ENCODE measurements at regions of chr5 and their contacts with region 1.

Region 1: DNA sequence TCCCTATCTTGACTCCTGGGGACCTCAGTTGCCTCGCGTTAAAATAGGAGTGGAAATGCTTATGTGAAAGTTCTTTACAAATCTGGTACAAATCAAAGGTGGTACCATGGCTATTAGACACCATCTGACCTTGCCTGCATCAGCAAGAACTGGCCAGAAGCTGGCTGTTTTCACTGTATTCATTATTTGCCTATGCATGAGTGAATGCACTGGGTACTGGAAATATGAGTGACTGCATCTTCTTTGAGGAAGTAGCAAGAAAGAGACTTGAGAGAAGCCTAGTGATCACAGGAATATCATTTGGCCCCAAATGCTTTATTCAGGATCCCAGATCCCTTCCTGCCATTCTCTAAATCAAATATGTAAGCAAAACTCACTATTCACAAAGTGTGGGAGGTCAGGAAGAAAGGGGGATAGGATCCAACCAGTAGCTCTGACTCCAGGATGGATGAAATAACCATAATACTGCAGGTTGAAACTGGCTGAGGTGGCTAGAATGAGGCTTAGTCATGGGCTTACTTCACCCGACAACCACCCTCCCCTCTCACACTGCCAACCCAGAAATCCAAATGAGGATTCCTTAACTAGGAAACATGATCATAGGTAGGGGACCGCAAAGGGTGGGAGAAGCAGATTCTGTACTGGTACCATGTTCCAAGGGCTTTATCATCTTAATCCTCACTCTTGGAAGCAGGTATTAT is 56.7 kb downstream of the FAM114A2 start:
- DNase-seq: no peak
- ATAC-seq: no peak
- H3K4me3 ChIP-seq: no peak overlapping the region
- H3K27ac ChIP-seq: no peak overlapping the region
- H3K4me1 ChIP-seq: peaks cover 0 to 23% of the 10 kb centered on the region in 2 experiments; a peak in 3 of 5 replicates
- H3K27me3 ChIP-seq: no peaks in the 10 kb centered on the region; a peak in 1 of 5 replicates
- CTCF ChIP-seq: no peak
- EP300 ChIP-seq: no peak
- POLR2A ChIP-seq: no peak
- RAD21 ChIP-seq: no peak

Region 2: DNA sequence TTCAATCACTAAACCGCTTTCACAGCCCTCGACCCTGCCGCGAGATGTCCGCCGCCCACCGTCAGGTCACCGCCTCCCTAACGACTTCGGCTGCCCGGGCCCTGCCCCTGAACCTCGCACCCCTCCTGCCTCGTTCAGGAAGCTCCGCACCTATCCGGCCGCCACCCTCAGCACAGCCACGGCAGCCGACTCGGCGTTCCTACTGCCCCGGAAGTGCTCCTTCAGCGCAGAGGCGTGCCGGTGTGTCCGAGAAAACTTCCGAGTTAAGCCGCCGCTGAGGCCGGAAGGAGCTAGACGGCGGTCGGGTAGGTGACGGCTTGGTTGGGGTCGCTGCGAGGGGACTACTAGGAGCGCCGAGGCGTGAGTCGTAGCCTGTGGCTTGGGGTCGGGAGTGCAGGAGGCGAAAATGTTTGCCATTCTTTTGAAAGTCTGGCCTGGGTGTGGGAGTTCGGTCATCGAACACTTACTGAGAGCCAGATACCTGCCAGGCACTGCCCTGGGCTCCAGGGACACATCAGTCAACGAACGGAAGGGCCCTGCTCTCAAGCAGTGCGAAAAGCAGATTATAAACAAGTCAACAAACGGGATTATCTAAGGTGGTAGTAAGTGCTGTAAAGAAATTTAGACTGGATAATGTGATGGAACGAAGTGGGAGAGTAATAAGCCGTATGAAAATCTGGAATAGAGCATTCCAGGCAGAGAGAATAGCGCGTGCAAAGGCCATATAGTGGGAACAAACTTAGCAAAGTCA is 56.8 kb after region 1 on chr5 and contains the starts of genes FAM114A2 and MFAP3:
- CTCF ChIA-PET with region 1: no interaction called
- POLR2A ChIA-PET with region 1: no interaction called
- in situ Hi-C with region 1: no loop called
- intact Hi-C with region 1: loop called (anchors 2 kb)
- DNase-seq: peak; percentile 86 to 94 (median 89)
- ATAC-seq: peak; percentile 100
- H3K4me3 ChIP-seq: peak within 1 kb of the TSS; percentile 87
- H3K27ac ChIP-seq: peak within 1 kb of the TSS; percentile 88
- H3K4me1 ChIP-seq: 0 out of 5 replicates have a peak, but pooled peaks cover 0 to 4% of the 10 kb centered on the region in 2 experiments
- H3K27me3 ChIP-seq: no peaks in the 10 kb centered on the region
- CTCF ChIP-seq: no peak
- EP300 ChIP-seq: peak; percentile 10; the same call in 1 of the 2 replicates
- POLR2A ChIP-seq: peak; percentile 95
- RAD21 ChIP-seq: no peak
- polyA plus RNA-seq, gene FAM114A2: 14.4 to 25.5 TPM
- polyA plus RNA-seq, gene MFAP3: 9.5 to 11.0 TPM

Region 3: GRCh38 chr5:154189819-154190594 is 208.0 kb after region 1 on chr5:
- CTCF ChIA-PET with region 1: no interaction called
- POLR2A ChIA-PET with region 1: no interaction called
- in situ Hi-C with region 1: loop called (anchors 10 kb)
- intact Hi-C with region 1: no loop called
- DNase-seq: peak; percentile 75 to 90 (median 84)
- ATAC-seq: peak; percentile 93
- H3K4me3 ChIP-seq: peak overlapping the region; percentile 73
- H3K27ac ChIP-seq: peak overlapping the region; percentile 71
- H3K4me1 ChIP-seq: peaks cover 18 to 21% of the 10 kb centered on the region in 2 experiments; a peak in 4 of 5 replicates
- H3K27me3 ChIP-seq: no peaks in the 10 kb centered on the region
- CTCF ChIP-seq: peak; percentile 64 to 78 (median 72)
- EP300 ChIP-seq: no peak
- POLR2A ChIP-seq: peak; percentile 70
- RAD21 ChIP-seq: peak; percentile 24 to 31

Region 4: DNA sequence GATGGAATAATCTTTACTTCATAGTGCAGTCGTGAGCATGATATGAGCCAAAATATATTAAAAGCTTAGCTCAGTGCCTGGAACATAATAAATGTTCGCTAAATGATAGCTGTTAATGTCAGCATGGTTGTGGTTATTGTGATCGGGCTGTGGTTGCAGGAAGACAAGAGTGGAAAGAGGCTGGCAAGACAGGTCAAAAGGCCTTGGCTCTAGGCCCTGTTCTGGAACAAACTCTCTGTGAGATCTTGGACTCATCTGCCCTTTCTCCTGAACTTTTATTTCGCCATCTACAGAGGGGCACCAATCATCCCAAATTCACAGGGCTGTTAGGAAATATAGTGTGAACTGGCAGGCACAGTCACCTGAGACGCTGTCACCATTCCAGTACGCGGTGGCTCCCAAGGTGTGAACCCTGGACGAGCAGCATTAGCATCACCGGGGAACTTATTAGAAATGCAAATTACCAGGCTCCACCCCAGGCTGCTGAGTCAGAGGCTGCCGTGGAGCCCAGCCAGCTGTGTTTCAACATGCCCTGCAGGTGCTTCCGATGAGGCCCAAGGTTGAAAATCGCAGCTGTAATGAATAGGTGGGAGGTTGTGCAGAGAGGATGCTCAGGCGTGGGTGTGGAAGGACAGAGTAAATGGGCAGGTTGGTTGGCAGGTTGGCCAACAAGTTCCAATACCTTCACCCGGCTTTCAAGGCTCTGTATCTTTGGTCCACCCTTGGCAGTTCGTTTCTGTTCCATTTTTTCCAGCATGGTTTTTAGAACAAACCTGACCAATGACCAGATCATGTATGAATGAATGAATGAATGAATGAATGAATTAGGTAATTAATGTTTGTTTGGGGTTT is 413.6 kb after region 1 on chr5:
- CTCF ChIA-PET with region 1: no interaction called
- POLR2A ChIA-PET with region 1: no interaction called
- in situ Hi-C with region 1: loop called (anchors 5 kb)
- intact Hi-C with region 1: no loop called
- DNase-seq: peak in 1 of 4 experiments; percentile 27
- ATAC-seq: peak; percentile 58
- H3K4me3 ChIP-seq: no peak overlapping the region
- H3K27ac ChIP-seq: no peak overlapping the region; the same call in 2 of the 3 replicates
- H3K4me1 ChIP-seq: peaks cover 6 to 7% of the 10 kb centered on the region in 2 experiments; a peak in 3 of 5 replicates
- H3K27me3 ChIP-seq: no peaks in the 10 kb centered on the region
- CTCF ChIP-seq: no peak
- EP300 ChIP-seq: no peak
- POLR2A ChIP-seq: no peak
- RAD21 ChIP-seq: no peak